ENCODE measurements at regions of chr1 and their contacts with region 1.

Region 1: GRCh38 chr1:28456078-28456477 is 49.8 kb upstream of the RCC1 start:
- DNase-seq: no peak

Region 2: GRCh38 chr1:28602536-28603439 is 146.7 kb after region 1 on chr1:
- in situ Hi-C with region 1: loop called (anchors 25 kb)
- DNase-seq: peak; percentile 80